Heart left ventricle (tissue), 16 donors: ENCODE measurements at regions of chr7 and their contacts with region 1.

Region 1: GRCh38 chr7:121519548-121520521 is 123.7 kb upstream of the FAM3C start:
- DNase-seq: peak in 4 of 5 donors; percentile 27 to 71 (median 48)
- ATAC-seq: peak; percentile 61 to 99 (median 89)
- H3K4me3 ChIP-seq: peak overlapping the region in 3 of 12 donors; percentile 4 to 15 (median 8)
- H3K27ac ChIP-seq: peak overlapping the region in 7 of 12 donors; percentile 29 to 52 (median 39)
- H3K4me1 ChIP-seq: no peaks in the 10 kb centered on the region
- H3K27me3 ChIP-seq: no peaks in the 10 kb centered on the region
- CTCF ChIP-seq: peak in 1 of 12 donors; percentile 3
- POLR2A ChIP-seq: no peak

Region 2: GRCh38 chr7:121541457-121541856 is 21.6 kb after region 1 on chr7:
- intact Hi-C with region 1: loop called in 1 of 10 experiments (anchors 2 kb)
- DNase-seq: no peak
- ATAC-seq: no peak
- H3K4me3 ChIP-seq: no peak overlapping the region
- H3K27ac ChIP-seq: no peak overlapping the region
- H3K4me1 ChIP-seq: no peaks in the 10 kb centered on the region
- H3K27me3 ChIP-seq: no peaks in the 10 kb centered on the region
- CTCF ChIP-seq: no peak
- POLR2A ChIP-seq: no peak